Activated T-helper 2 cell treated with anti-CD3 and anti-CD28 coated beads, Interferon-gamma antibody, Interleukin-2, Interleukin-4, amounts not matched to agents 10 μg/mL and 5 μg/mL and 100 μg/mL, durations not matched to agents 14 hours and 24 hours and 36 hours (primary cell): ENCODE measurements at regions of chr22 and their contacts with region 1.

Region 1: GRCh38 chr22:42614312-42615091 is at the start of gene POLDIP3:
- DNase-seq: peak; percentile 97
- H3K4me3 Mint-ChIP-seq: peak within 1 kb of the TSS; percentile 95
- H3K27ac Mint-ChIP-seq: peak within 1 kb of the TSS; percentile 99
- H3K4me1 Mint-ChIP-seq: peaks cover 35% of the 10 kb centered on the region
- H3K27me3 Mint-ChIP-seq: no peaks in the 10 kb centered on the region
- total RNA-seq, gene POLDIP3: 74.7 and 80.7 TPM in 2 replicates

Region 2: DNA sequence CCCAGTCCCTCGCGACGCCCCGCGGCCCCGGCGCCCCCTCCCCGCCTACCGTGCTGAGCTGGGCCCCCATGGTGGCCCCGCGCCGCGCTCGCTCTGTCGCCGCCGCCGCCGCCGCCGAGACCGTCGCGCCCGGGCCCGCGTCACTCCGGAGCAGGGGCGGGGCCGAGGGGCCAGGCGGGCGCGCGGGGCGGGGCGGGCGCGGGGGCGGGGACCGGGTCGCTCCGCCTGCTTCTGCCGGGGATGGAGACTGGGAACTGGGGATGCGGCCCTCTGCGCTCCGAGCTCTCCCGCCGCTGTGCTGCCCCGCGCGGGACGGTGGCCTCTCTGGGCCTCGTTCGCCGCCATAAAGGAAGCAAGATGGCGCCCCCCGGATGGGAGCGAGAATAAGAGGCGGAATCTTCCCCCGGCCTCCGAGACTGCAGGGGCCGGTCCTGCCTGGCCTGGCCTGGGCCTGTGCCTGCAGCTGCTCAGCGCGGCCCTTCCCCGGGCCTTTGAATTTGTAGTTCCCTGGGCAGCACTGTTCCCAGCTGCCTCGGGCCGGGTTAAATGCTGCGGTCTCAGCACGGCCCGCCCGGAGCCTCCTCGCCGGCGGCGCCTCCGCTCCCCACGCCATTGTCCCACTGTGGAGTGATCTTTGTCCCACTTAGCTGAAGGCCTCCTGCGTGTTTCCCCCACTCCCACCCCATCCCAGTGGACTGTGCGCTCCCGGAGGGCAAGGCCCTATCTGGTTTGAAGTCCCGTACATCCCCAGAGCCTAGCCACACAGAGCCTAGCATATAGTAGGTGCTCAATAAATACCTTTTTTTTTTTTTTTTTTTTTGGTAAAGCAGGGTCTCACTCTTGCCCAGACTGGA is 35.0 kb after region 1 on chr22 and contains the start of gene CYB5R3:
- intact Hi-C with region 1: loop called (anchors 2 kb)
- DNase-seq: peak; percentile 73
- H3K4me3 Mint-ChIP-seq: peak within 1 kb of the TSS; percentile 95
- H3K27ac Mint-ChIP-seq: peak within 1 kb of the TSS; percentile 95
- H3K4me1 Mint-ChIP-seq: peaks cover 8% of the 10 kb centered on the region
- H3K27me3 Mint-ChIP-seq: no peaks in the 10 kb centered on the region
- total RNA-seq, gene CYB5R3: 87.3 and 88.6 TPM in 2 replicates